Psoas muscle (tissue), 8 donors: ENCODE measurements at regions of chr14 and their contacts with region 1.

Region 1: GRCh38 chr14:36647824-36648753 is 13.6 kb upstream of the PAX9 start:
- DNase-seq: peak in 1 of 2 donors; percentile 66
- ATAC-seq: peak; percentile 55 to 86 (median 71)
- H3K4me3 ChIP-seq: peak overlapping the region; percentile 59
- H3K27ac ChIP-seq: no peak overlapping the region
- H3K4me1 ChIP-seq: peaks cover 17% of the 10 kb centered on the region
- H3K27me3 ChIP-seq: peaks cover 7 to 91% (median 28%) of the 10 kb centered on the region in 3 donors
- CTCF ChIP-seq: peak; percentile 47

Region 2: GRCh38 chr14:36941783-36942521 is 293.9 kb after region 1 on chr14:
- intact Hi-C with region 1: loop called in 1 of 2 experiments (anchors 5 kb)
- DNase-seq: peak; percentile 70 to 81
- ATAC-seq: peak; percentile 80 to 94 (median 81)
- H3K4me3 ChIP-seq: no peak overlapping the region
- H3K27ac ChIP-seq: no peak overlapping the region
- H3K4me1 ChIP-seq: no peaks in the 10 kb centered on the region
- H3K27me3 ChIP-seq: peaks cover 0 to 8% (median 0%) of the 10 kb centered on the region in 3 donors
- CTCF ChIP-seq: peak; percentile 97

Region 3: DNA sequence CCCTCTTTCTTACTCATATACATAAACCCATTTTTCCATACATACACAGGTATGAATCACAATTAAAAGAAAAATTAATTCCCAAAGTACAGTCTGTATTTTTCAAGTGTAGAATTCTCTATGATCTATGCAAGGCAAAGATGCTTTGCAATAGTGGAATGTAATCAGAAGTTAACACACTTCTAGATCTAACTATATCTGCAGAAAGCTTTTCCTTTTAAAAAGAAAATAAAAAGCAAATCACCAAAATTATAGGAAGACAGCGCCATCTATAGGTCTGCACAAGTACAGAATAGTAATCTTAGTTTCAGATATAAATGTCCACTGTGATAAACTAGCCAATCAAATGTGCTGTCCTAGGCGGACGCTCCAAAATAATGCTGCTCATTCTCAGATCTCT is 502.3 kb after region 1 on chr14:
- intact Hi-C with region 1: loop called in 1 of 2 experiments (anchors 5 kb)
- DNase-seq: no peak
- ATAC-seq: peak; percentile 36 to 69 (median 46)
- H3K4me3 ChIP-seq: no peak overlapping the region
- H3K27ac ChIP-seq: no peak overlapping the region
- H3K4me1 ChIP-seq: no peaks in the 10 kb centered on the region
- H3K27me3 ChIP-seq: no peaks in the 10 kb centered on the region
- CTCF ChIP-seq: peak; percentile 65